ENCODE measurements at regions of chr4 and their contacts with region 1.

Region 1: GRCh38 chr4:107330915-107331314 is 294.8 kb upstream of the DKK2 start:
- DNase-seq: no peak

Region 2: GRCh38 chr4:107292979-107293378 is 37.9 kb before region 1 on chr4:
- intact Hi-C with region 1: loop called in 1 of 2 experiments (anchors 1 kb)
- DNase-seq: no peak